ENCODE measurements at regions of chr12 and their contacts with region 1.

Region 1: GRCh38 chr12:68279227-68280054 is 26.0 kb upstream of the IL22 start:
- DNase-seq: no peak
- H3K4me3 Mint-ChIP-seq: no peak overlapping the region
- H3K27ac Mint-ChIP-seq: peak overlapping the region; percentile 23
- H3K4me1 Mint-ChIP-seq: peaks cover 60% of the 10 kb centered on the region
- H3K27me3 Mint-ChIP-seq: peaks cover 38% of the 10 kb centered on the region

Region 2: GRCh38 chr12:68223083-68223747 is 56.2 kb before region 1 on chr12:
- intact Hi-C with region 1: no loop called
- DNase-seq: peak; percentile 59
- H3K4me3 Mint-ChIP-seq: no peak overlapping the region
- H3K27ac Mint-ChIP-seq: no peak overlapping the region
- H3K4me1 Mint-ChIP-seq: peaks cover 25% of the 10 kb centered on the region
- H3K27me3 Mint-ChIP-seq: peaks cover 44% of the 10 kb centered on the region

Region 3: GRCh38 chr12:68259318-68259940 is 20.0 kb before region 1 on chr12:
- intact Hi-C with region 1: loop called (anchors 1 kb)
- DNase-seq: no peak
- H3K4me3 Mint-ChIP-seq: no peak overlapping the region
- H3K27ac Mint-ChIP-seq: peak overlapping the region; percentile 44
- H3K4me1 Mint-ChIP-seq: peaks cover 28% of the 10 kb centered on the region
- H3K27me3 Mint-ChIP-seq: peaks cover 58% of the 10 kb centered on the region

Region 4: GRCh38 chr12:68290126-68290525 is 10.7 kb after region 1 on chr12:
- intact Hi-C with region 1: loop called (anchors 1 kb)
- DNase-seq: peak; percentile 36
- H3K4me3 Mint-ChIP-seq: no peak overlapping the region
- H3K27ac Mint-ChIP-seq: no peak overlapping the region
- H3K4me1 Mint-ChIP-seq: peaks cover 35% of the 10 kb centered on the region
- H3K27me3 Mint-ChIP-seq: peaks cover 28% of the 10 kb centered on the region

Region 5: DNA sequence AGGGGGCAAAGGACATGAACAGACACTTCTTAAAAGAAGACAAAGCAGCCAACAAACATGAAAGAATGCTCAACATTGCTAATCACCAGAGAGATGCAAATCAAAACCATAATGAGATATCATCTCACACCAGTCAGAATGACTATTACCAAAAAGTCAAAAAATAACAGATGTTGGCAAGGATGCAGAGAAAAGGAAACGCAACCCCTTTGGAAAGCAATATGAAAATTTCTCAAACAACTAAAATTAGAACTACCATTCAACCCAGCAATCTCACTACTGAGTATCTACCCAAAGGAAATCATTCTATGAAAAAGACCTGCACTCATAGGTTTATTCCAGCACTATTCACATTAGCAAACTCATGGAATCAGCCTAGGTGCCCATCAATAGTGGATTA is 27.1 kb after region 1 on chr12:
- intact Hi-C with region 1: loop called (anchors 2 kb)
- DNase-seq: no peak
- H3K4me3 Mint-ChIP-seq: no peak overlapping the region
- H3K27ac Mint-ChIP-seq: no peak overlapping the region
- H3K4me1 Mint-ChIP-seq: peaks cover 12% of the 10 kb centered on the region
- H3K27me3 Mint-ChIP-seq: no peaks in the 10 kb centered on the region

Region 6: DNA sequence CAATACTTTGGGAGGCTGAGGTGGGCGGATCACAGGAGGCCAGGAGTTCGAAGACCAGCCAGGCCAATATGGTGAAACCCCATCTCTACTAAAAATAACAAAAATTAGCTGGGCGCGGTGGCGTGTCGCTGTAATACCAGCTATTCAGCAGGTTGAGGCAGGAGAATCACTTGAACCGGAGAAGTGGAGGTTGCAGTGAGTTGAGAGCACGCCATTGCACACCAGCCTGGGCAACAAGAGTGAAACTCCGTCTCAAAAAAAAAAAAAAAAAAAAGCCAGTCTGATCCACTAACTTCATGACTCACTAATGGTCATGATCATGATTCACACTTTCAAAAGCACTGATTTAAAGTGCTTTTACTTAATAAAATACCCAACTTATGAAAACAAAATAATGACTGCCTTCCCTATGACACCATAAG is 691.9 kb after region 1 on chr12:
- intact Hi-C with region 1: no loop called
- DNase-seq: no peak
- H3K4me3 Mint-ChIP-seq: no peak overlapping the region
- H3K27ac Mint-ChIP-seq: no peak overlapping the region
- H3K4me1 Mint-ChIP-seq: peaks cover 2% of the 10 kb centered on the region
- H3K27me3 Mint-ChIP-seq: no peaks in the 10 kb centered on the region

Measured in activated T-helper 2 cell treated with anti-CD3 and anti-CD28 coated beads, Interferon-gamma antibody, Interleukin-2, Interleukin-4, amounts not matched to agents 10 μg/mL and 5 μg/mL and 100 μg/mL, durations not matched to agents 14 hours and 24 hours and 36 hours (primary cell).